Panc1 (cell line): ENCODE measurements at regions of chr1 and their contacts with region 1.

Region 1: GRCh38 chr1:172322219-172323061 is 98.0 kb upstream of the C1orf105 start:
- DNase-seq: peak; percentile 91
- ATAC-seq: peak; percentile 92
- H3K4me3 ChIP-seq: peak overlapping the region; percentile 35 to 56
- H3K27ac ChIP-seq: peak overlapping the region; percentile 100
- H3K4me1 ChIP-seq: peaks cover 51% of the 10 kb centered on the region
- H3K27me3 ChIP-seq: no peaks in the 10 kb centered on the region
- CTCF ChIP-seq: peak; percentile 9; the same call in 1 of the 2 replicates

Region 2: GRCh38 chr1:171919891-171920887 is 402.3 kb before region 1 on chr1:
- CTCF ChIA-PET with region 1: no interaction called
- POLR2A ChIA-PET with region 1: no interaction called
- in situ Hi-C with region 1: no loop called
- intact Hi-C with region 1: no loop called
- DNase-seq: no peak
- ATAC-seq: no peak
- H3K4me3 ChIP-seq: no peak overlapping the region
- H3K27ac ChIP-seq: no peak overlapping the region
- H3K4me1 ChIP-seq: no peaks in the 10 kb centered on the region
- H3K27me3 ChIP-seq: peaks cover 5% of the 10 kb centered on the region
- CTCF ChIP-seq: no peak

Region 3: GRCh38 chr1:172002725-172003345 is 319.6 kb before region 1 on chr1:
- CTCF ChIA-PET with region 1: no interaction called
- POLR2A ChIA-PET with region 1: no interaction called
- in situ Hi-C with region 1: no loop called
- intact Hi-C with region 1: loop called (anchors 5 kb)
- DNase-seq: peak; percentile 65
- ATAC-seq: peak; percentile 81
- H3K4me3 ChIP-seq: no peak overlapping the region
- H3K27ac ChIP-seq: peak overlapping the region; percentile 86; the same call in 1 of the 2 replicates
- H3K4me1 ChIP-seq: peaks cover 5% of the 10 kb centered on the region; the same call in 1 of the 2 replicates
- H3K27me3 ChIP-seq: no peaks in the 10 kb centered on the region
- CTCF ChIP-seq: peak; percentile 81; the same call in 1 of the 2 replicates